Activated CD4-positive, alpha-beta T cell treated with anti-CD3 and anti-CD28 coated beads for 36 hours (primary cell): ENCODE measurements at regions of chr12 and their contacts with region 1.

Region 1: DNA sequence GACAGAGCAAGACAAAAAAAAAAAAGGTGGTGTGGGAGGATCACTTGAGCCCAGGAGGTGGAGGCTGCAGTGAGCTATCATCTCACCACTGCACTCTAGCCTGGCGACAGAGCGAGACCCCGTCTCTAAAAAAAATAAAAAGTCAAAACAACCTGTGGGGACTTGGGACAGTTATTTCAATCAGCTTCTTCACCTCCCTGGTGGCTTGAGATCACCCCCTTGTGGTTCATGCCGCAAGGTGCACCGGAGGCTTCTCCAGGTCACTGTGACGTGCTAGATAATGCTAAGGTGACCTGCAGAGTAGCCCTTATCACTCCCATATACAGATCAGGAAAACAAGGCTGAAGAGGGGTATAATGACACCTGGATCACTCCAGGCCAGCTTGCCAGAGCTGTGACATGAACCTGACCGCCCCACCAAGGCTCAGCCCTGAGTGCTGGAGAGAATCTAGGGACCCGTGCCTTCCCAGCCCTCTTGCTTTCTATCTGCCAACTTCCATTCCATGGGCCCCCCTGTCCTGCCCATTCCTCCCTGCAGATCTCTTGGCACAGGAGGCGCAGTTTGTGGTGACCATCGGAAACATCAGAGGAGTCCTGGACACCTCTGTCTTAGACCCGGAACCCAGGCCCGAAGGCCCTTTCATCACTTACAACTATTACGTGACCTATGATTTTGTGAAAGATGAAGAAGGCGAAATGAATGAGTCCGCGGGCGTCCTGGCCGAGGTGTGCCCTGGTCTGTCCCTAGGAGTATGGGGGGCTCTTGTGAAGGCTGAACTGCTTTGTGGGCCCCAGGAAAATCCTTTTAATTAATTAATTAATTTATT is 8.1 kb downstream of the LRRC43 start:
- DNase-seq: peak; percentile 86
- ATAC-seq: peak; percentile 93
- H3K4me3 Mint-ChIP-seq: no peak overlapping the region
- H3K27ac Mint-ChIP-seq: no peak overlapping the region
- H3K4me1 Mint-ChIP-seq: no peaks in the 10 kb centered on the region
- H3K27me3 Mint-ChIP-seq: peaks cover 2% of the 10 kb centered on the region

Region 2: DNA sequence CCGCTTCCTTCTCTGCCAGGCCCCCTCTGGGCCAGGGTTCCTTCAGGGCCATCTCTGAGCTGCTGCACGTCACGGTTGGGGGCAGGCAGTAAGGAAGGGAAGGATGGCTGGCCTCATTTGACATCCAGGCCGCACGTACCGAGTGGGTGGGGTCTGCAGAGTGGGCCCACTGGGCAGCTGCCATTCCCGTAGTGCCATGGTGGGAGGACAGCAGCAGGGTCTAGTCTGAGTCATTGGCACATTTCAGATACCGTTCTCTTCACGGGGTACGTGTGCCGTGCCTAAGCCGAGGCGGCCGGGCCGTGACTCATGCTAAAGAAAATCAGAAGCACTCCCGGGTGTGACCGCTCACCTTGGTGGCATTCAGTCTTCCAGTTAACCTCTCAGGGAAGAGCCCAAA is 60.9 kb before region 1 on chr12:
- CTCF ChIA-PET with region 1: interaction called, 11 read pairs
- POLR2A ChIA-PET with region 1: interaction called, 4 read pairs
- intact Hi-C with region 1: loop called (anchors 1 to 2 kb)
- DNase-seq: no peak
- ATAC-seq: no peak
- H3K4me3 Mint-ChIP-seq: no peak overlapping the region
- H3K27ac Mint-ChIP-seq: no peak overlapping the region
- H3K4me1 Mint-ChIP-seq: peaks cover 5% of the 10 kb centered on the region
- H3K27me3 Mint-ChIP-seq: no peaks in the 10 kb centered on the region

Region 3: GRCh38 chr12:122159882-122160281 is 31.2 kb before region 1 on chr12:
- CTCF ChIA-PET with region 1: interaction called, 3 read pairs
- POLR2A ChIA-PET with region 1: no interaction called
- intact Hi-C with region 1: loop called (anchors 1 to 5 kb)
- DNase-seq: no peak
- ATAC-seq: no peak
- H3K4me3 Mint-ChIP-seq: no peak overlapping the region
- H3K27ac Mint-ChIP-seq: no peak overlapping the region
- H3K4me1 Mint-ChIP-seq: peaks cover 8% of the 10 kb centered on the region
- H3K27me3 Mint-ChIP-seq: peaks cover 2% of the 10 kb centered on the region